ENCODE measurements at regions of chr5 and their contacts with region 1.

Region 1: GRCh38 chr5:139293504-139294373 is at the start of gene MATR3:
- DNase-seq: peak; percentile 96 to 97 (median 96)
- ATAC-seq: peak; percentile 94 to 96 (median 96)
- H3K4me3 ChIP-seq: peak within 1 kb of the TSS; percentile 81 to 89 (median 85)
- H3K27ac ChIP-seq: peak within 1 kb of the TSS; percentile 98 to 99 (median 99)
- H3K4me1 ChIP-seq: peaks cover 0 to 32% (median 12%) of the 10 kb centered on the region in 4 donors
- H3K27me3 ChIP-seq: no peaks in the 10 kb centered on the region
- CTCF ChIP-seq: no peak
- POLR2A ChIP-seq: peak; percentile 98
- total RNA-seq, gene MATR3: 43.5 to 73.8 (median 65.3) TPM

Region 2: GRCh38 chr5:139389701-139390638 is 96.2 kb after region 1 on chr5 and contains the start of gene MZB1:
- intact Hi-C with region 1: loop called in 1 of 2 experiments (anchors 10 kb)
- DNase-seq: peak in 1 of 3 donors; percentile 51
- ATAC-seq: peak in 2 of 4 donors; percentile 4 to 8
- H3K4me3 ChIP-seq: no peak within 1 kb of the TSS
- H3K27ac ChIP-seq: peak within 1 kb of the TSS in 1 of 3 donors; percentile 24
- H3K4me1 ChIP-seq: peaks cover 0 to 40% (median 4%) of the 10 kb centered on the region in 4 donors
- H3K27me3 ChIP-seq: peaks cover 0 to 15% of the 10 kb centered on the region in 2 donors
- CTCF ChIP-seq: no peak
- POLR2A ChIP-seq: no peak
- total RNA-seq, gene MZB1: 0.37 to 5.1 (median 1.1) TPM

Region 3: DNA sequence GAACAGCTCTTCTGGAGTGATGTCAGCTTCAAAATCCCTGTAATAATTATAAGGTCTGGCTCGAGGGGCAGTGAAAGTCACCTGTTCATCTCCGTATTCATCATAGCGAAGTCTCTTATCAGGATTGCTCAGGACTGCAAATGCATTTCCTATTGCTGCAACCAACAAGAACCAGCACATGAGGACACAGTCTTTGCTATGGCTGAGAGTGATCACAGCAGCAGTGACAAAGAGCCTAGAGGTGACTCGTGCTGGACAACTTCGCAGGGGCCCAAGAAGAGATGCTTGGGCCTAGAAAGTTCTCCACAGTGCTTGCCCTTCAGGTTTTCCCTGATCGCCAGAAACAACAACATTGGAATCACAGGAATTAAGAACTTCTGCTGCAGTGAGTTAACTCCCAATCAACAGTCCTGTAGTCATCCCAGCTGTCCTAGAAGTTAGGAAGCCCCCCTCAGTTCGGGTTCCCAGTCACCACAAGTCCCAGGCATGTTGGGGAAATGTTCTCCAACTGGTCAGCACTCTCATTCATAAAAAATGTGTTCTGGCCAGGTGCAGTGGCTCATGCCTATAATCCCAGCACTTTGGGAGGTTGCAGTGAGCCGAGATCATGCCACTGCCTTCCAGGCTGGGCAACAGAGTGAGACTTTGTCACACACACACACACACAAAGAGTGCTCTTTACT is 132.6 kb after region 1 on chr5:
- intact Hi-C with region 1: no loop called
- DNase-seq: no peak
- ATAC-seq: no peak
- H3K4me3 ChIP-seq: no peak overlapping the region
- H3K27ac ChIP-seq: no peak overlapping the region
- H3K4me1 ChIP-seq: no peaks in the 10 kb centered on the region
- H3K27me3 ChIP-seq: no peaks in the 10 kb centered on the region
- CTCF ChIP-seq: no peak
- POLR2A ChIP-seq: no peak